Posterior vena cava (tissue), 2 donors: ENCODE measurements at regions of chr20 and their contacts with region 1.

Region 1: GRCh38 chr20:49982346-49983122 is at the start of gene SNAI1:
- DNase-seq: peak; percentile 92
- total RNA-seq, gene SNAI1: 8.6 to 8.9 TPM

Region 2: GRCh38 chr20:50027611-50028105 is 45.1 kb after region 1 on chr20:
- intact Hi-C with region 1: loop called in 1 of 2 experiments (anchors 5 kb)
- DNase-seq: peak; percentile 95

Region 3: GRCh38 chr20:50058747-50059404 is 76.3 kb after region 1 on chr20:
- intact Hi-C with region 1: no loop called
- DNase-seq: no peak

Region 4: GRCh38 chr20:50070991-50071888 is 88.7 kb after region 1 on chr20:
- intact Hi-C with region 1: loop called (anchors 2 kb)
- DNase-seq: peak; percentile 98

Region 5: DNA sequence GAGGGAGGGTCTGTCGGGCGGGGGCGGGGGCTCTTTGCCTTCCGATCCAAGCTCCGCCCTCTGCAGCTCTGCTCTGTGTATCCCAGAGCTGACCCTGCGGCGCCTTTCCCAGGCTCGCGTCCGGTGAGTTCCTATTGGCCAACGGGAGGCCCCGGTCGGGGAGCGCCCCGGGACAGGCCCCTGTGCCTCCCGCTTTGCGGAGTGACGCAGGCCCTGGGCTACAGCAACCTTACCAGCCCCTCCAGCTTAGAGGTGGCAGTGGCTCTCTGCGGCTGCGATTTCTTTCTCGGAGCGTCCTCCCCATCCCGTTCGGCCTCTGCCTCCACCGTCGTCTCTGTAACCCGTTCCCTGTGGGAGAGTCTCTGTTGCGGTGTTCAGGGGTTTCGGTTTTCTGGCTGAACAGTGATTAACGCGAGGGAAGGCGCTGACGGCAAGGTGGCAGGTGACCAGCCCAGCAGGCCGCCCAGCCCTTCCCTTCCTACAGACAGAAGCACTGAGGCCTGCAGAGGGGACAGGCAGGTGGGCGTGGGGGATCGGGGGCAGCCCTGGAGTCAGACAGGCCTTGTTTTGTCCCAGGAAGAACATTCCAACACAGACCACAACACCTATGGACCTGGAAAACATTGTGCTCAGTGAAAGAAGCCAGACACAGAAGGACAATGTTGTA is 189.9 kb after region 1 on chr20:
- intact Hi-C with region 1: loop called (anchors 5 to 10 kb)
- DNase-seq: peak; percentile 93

Region 6: DNA sequence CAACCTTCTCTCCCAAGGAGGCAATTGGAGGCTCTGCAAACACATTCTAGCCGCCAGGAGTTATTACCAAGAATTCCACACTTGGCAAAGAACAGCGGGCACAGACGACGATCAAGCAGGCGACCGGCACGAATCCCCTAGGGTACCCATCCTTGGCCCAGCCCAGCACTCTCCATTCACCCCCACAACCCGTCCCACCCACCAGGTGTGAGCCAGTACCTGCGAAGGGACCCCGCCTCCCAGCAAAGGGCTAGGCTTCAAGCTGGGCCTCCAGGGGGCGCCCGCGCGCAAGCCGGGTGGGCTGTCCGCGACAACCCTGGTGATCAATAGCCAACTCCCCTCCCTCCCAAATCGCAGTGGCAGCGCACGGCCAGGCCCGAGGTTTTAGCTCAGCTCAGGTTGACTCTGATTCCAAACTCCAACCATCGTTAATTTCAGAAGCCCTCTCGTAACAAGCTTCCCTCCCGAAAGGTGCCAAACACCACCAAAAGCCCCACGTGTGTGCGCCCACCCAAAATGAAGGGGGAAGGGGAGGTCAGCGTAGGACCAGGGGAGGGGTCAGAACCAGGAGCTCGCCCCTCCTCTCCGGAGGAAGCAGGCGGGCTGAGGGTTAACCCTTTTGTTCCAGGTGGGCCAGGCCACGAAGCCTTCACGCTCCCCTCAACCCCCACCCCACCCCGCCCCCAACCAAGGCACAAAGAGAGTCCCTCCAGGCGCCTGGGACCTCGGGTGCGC is 1817.7 kb after region 1 on chr20:
- intact Hi-C with region 1: no loop called
- DNase-seq: no peak